Activated T-helper 2 cell treated with anti-CD3 and anti-CD28 coated beads, Interferon-gamma antibody, Interleukin-2, Interleukin-4, amounts not matched to agents 10 μg/mL and 5 μg/mL and 100 μg/mL, durations not matched to agents 14 hours and 24 hours and 36 hours (primary cell): ENCODE measurements at regions of chr9 and their contacts with region 1.

Region 1: DNA sequence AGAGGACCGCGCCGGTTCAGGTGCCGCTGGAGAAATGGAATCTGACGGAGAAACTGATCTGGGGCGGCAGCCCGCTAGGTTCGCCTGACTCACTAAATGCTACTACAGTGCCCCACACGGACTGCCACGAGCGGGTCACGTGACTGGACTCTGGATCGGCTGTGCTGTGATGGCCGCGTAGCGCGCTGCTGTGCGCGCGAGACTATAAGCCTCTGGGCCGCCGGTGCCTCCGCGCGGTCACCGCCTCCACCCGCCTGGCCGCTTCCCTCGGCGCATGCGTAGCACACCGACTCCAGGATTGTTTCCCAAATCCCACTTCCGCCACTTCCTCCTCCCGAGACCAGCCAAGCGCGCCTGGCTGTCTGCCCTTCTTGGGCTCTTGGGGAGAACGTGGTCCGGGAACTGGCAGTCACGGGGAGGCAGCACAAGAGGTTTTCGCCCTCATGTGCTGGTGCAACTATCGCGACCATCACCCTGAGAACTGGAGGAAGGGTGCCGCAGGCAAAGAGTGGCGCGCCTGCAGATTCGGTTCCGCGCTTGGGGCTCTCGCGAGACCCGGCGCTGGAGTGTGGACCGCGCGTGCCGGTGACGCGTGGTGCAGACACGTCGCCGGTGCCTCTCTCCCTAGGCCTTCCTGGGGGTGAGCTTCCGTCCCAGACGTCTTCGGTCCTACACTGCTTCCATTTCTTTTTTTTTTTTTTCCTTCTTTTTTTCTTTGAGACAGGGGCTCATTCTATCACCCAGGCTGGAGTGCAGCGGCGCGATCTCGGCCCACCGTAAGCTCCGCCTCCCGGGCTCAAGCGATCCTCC is 35.8 kb upstream of the GLDC start:
- DNase-seq: peak; percentile 89
- H3K4me3 Mint-ChIP-seq: peak overlapping the region; percentile 93
- H3K27ac Mint-ChIP-seq: peak overlapping the region; percentile 99
- H3K4me1 Mint-ChIP-seq: peaks cover 17% of the 10 kb centered on the region
- H3K27me3 Mint-ChIP-seq: no peaks in the 10 kb centered on the region

Region 2: GRCh38 chr9:5851445-5851844 is 829.9 kb before region 1 on chr9:
- intact Hi-C with region 1: loop called (anchors 5 kb)
- DNase-seq: peak; percentile 48
- H3K4me3 Mint-ChIP-seq: peak overlapping the region; percentile 15
- H3K27ac Mint-ChIP-seq: peak overlapping the region; percentile 75
- H3K4me1 Mint-ChIP-seq: peaks cover 67% of the 10 kb centered on the region
- H3K27me3 Mint-ChIP-seq: no peaks in the 10 kb centered on the region

Region 3: GRCh38 chr9:6598249-6598725 is 83.1 kb before region 1 on chr9:
- intact Hi-C with region 1: loop called (anchors 2 kb)
- DNase-seq: no peak
- H3K4me3 Mint-ChIP-seq: no peak overlapping the region
- H3K27ac Mint-ChIP-seq: peak overlapping the region; percentile 51
- H3K4me1 Mint-ChIP-seq: peaks cover 5% of the 10 kb centered on the region
- H3K27me3 Mint-ChIP-seq: no peaks in the 10 kb centered on the region

Region 4: DNA sequence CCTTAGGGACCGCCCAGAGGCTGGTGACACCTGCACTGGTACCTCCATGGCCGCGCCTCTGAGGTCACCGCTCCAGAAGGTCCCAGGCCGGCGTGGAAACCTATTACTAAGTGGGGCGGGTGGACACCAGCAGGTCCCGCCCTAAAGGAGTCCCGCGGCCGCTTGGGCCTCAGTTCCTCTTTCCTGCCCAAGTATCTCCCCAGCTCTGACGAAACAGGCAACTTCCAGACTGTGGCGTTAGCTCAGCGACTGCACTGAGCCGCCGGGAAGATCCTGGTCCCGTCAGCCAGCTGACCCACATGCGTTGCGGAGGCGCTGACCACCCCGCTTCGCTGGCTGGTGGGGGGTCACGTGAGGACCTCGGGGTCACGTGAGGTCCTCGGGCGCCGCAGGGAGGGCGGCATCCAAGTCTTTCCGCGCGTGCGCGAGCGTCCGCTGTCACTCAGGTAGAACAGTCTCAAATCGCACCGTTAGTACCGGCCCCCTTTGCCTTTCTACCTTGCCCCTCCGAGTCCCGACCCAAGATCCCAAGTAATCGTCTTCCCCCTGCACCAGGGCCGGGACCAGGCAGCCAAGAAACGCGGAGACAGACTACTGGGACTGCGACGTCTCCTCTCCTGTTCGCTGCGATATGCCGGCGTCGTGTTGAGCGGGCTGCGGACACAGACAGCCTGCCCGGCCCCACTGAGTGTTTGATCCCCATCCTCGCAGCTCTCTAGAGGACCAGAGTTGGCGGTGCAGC is 22.7 kb after region 1 on chr9:
- intact Hi-C with region 1: loop called (anchors 1 kb)
- DNase-seq: peak; percentile 82
- H3K4me3 Mint-ChIP-seq: peak overlapping the region; percentile 91
- H3K27ac Mint-ChIP-seq: peak overlapping the region; percentile 91
- H3K4me1 Mint-ChIP-seq: peaks cover 20% of the 10 kb centered on the region
- H3K27me3 Mint-ChIP-seq: peaks cover 2% of the 10 kb centered on the region

Region 5: DNA sequence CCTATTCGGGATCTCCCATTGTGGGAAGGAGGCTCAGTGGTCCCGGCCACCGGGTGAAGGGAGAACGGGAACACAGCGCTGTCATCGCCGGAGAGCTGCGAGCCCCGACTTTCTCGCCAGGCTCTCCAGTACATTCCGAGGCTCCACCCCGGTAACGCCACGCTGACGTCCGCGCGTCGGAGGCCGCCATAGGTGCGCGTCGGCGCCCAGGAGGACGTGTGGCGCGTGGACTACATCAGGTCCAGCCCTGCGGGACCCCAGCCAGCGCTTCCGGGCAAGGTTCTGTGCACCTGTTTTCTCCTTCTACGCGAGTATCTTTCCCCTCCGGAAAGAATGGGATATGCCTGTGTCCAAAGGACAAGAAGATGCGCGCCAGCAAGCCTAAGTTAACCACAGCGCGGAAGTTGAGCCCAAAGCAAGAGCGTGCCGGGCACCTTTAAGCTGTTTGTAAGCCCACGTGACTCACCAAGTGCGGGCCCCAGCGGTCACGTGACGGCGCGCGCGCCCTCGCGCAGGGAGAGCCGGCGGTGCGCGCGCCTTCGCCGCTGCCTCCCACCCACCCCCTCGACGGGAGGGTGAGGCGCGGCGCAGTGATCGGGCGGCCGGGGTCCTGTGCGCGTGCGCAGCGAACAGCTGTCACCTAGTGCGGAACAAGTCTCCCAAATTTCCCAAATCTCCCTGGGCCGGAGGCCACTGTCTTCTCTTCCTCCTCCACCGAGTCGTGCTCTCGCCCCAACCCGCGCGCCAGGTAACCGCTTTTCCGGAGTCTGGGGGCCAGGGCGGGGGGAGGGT is 76.3 kb after region 1 on chr9 and contains the start of gene KDM4C:
- intact Hi-C with region 1: loop called (anchors 1 kb)
- DNase-seq: peak; percentile 91
- H3K4me3 Mint-ChIP-seq: peak within 1 kb of the TSS; percentile 97
- H3K27ac Mint-ChIP-seq: peak within 1 kb of the TSS; percentile 100
- H3K4me1 Mint-ChIP-seq: peaks cover 16% of the 10 kb centered on the region
- H3K27me3 Mint-ChIP-seq: no peaks in the 10 kb centered on the region
- total RNA-seq, gene KDM4C: 36.0 and 38.4 TPM in 2 replicates

Region 6: GRCh38 chr9:6877671-6878161 is 196.4 kb after region 1 on chr9:
- intact Hi-C with region 1: no loop called
- DNase-seq: no peak
- H3K4me3 Mint-ChIP-seq: no peak overlapping the region
- H3K27ac Mint-ChIP-seq: no peak overlapping the region
- H3K4me1 Mint-ChIP-seq: peaks cover 22% of the 10 kb centered on the region
- H3K27me3 Mint-ChIP-seq: no peaks in the 10 kb centered on the region

Region 7: GRCh38 chr9:8531826-8532415 is 1850.6 kb after region 1 on chr9:
- intact Hi-C with region 1: no loop called
- DNase-seq: no peak
- H3K4me3 Mint-ChIP-seq: no peak overlapping the region
- H3K27ac Mint-ChIP-seq: no peak overlapping the region
- H3K4me1 Mint-ChIP-seq: no peaks in the 10 kb centered on the region
- H3K27me3 Mint-ChIP-seq: no peaks in the 10 kb centered on the region